Activated CD4-positive, alpha-beta T cell treated with anti-CD3 and anti-CD28 coated beads for 36 hours (primary cell): ENCODE measurements at regions of chr7 and their contacts with region 1.

Region 1: GRCh38 chr7:95916573-95917297 is 144.4 kb downstream of the DYNC1I1 start:
- DNase-seq: peak; percentile 86
- ATAC-seq: no peak
- H3K4me3 Mint-ChIP-seq: no peak overlapping the region
- H3K27ac Mint-ChIP-seq: no peak overlapping the region
- H3K4me1 Mint-ChIP-seq: peaks cover 2% of the 10 kb centered on the region
- H3K27me3 Mint-ChIP-seq: peaks cover 15% of the 10 kb centered on the region

Region 2: GRCh38 chr7:96067321-96067720 is 150.6 kb after region 1 on chr7:
- CTCF ChIA-PET with region 1: interaction called, 3 read pairs
- POLR2A ChIA-PET with region 1: no interaction called
- intact Hi-C with region 1: loop called in 1 of 2 experiments (anchors 5 kb)
- DNase-seq: no peak
- ATAC-seq: no peak
- H3K4me3 Mint-ChIP-seq: no peak overlapping the region
- H3K27ac Mint-ChIP-seq: no peak overlapping the region
- H3K4me1 Mint-ChIP-seq: no peaks in the 10 kb centered on the region
- H3K27me3 Mint-ChIP-seq: peaks cover 45% of the 10 kb centered on the region

Region 3: GRCh38 chr7:96075510-96076349 is 159.0 kb after region 1 on chr7:
- CTCF ChIA-PET with region 1: interaction called, 3 read pairs
- POLR2A ChIA-PET with region 1: no interaction called
- intact Hi-C with region 1: loop called in 1 of 2 experiments (anchors 2 kb)
- DNase-seq: peak; percentile 71
- ATAC-seq: peak; percentile 81
- H3K4me3 Mint-ChIP-seq: peak overlapping the region; percentile 69
- H3K27ac Mint-ChIP-seq: no peak overlapping the region
- H3K4me1 Mint-ChIP-seq: peaks cover 8% of the 10 kb centered on the region
- H3K27me3 Mint-ChIP-seq: peaks cover 34% of the 10 kb centered on the region

Region 4: GRCh38 chr7:96414931-96415292 is 498.2 kb after region 1 on chr7:
- CTCF ChIA-PET with region 1: no interaction called
- POLR2A ChIA-PET with region 1: no interaction called
- intact Hi-C with region 1: loop called (anchors 5 to 10 kb)
- DNase-seq: peak; percentile 66
- ATAC-seq: peak; percentile 55
- H3K4me3 Mint-ChIP-seq: no peak overlapping the region
- H3K27ac Mint-ChIP-seq: no peak overlapping the region
- H3K4me1 Mint-ChIP-seq: no peaks in the 10 kb centered on the region
- H3K27me3 Mint-ChIP-seq: peaks cover 10% of the 10 kb centered on the region

Region 5: GRCh38 chr7:97064967-97065587 is 1148.3 kb after region 1 on chr7:
- CTCF ChIA-PET with region 1: interaction called, 7 read pairs
- POLR2A ChIA-PET with region 1: no interaction called
- intact Hi-C with region 1: loop called (anchors 1 to 2 kb)
- DNase-seq: peak; percentile 5
- ATAC-seq: no peak
- H3K4me3 Mint-ChIP-seq: no peak overlapping the region
- H3K27ac Mint-ChIP-seq: no peak overlapping the region
- H3K4me1 Mint-ChIP-seq: no peaks in the 10 kb centered on the region
- H3K27me3 Mint-ChIP-seq: peaks cover 8% of the 10 kb centered on the region